ENCODE measurements at regions of chr22 and their contacts with region 1.

Region 1: DNA sequence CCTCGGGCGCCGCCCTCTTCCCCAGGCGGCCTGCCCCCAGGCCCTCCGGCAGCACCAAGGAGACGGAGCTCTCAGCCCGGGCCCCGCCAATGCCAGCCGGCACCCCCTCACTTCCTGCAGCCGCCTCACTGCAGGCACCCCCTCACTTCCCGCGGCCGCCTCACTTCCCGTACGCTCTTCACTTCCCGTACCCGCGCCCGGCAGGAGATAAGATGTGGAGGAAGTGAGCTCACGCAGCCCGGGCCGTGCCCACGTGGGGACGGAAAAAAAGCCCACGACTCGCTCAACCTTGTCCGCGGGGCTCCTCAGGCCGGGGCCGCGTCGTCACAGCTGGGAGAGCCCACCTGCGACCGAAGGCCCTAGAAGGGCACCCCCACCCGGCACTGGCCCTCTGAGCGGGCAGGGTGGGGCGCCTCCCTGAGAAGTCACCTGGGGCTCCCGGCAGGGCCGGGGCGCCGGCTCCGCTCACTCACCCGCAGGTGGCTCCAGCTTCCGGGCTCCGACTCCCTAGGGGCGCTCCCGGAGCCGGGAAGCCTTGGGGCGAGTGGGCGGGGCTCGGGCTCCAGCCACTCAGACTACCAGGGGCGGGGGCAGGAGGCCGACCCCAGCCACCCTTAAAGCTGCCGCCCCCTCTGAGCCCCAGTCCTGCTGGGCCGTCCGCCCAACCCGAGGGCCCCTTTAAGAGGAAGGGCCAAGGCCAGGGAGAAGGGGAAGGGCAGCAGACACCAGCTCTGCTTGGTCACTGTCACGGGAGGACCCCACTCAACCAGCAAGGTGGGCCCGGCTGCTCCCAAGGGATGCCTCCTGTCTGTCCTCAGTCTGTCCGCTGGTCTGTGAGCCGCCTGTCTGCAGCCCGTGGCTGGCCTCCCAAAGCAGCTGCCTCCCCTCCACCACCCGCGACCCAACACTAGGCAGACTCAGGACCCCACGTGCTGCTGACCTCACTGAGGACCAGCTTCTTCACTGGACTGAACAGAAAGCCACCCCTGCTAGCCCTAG is 31.4 kb downstream of the PISD start:
- DNase-seq: peak; percentile 95
- H3K4me3 Mint-ChIP-seq: peak overlapping the region; percentile 90
- H3K27ac Mint-ChIP-seq: peak overlapping the region; percentile 90
- H3K4me1 Mint-ChIP-seq: peaks cover 33% of the 10 kb centered on the region
- H3K27me3 Mint-ChIP-seq: no peaks in the 10 kb centered on the region

Region 2: DNA sequence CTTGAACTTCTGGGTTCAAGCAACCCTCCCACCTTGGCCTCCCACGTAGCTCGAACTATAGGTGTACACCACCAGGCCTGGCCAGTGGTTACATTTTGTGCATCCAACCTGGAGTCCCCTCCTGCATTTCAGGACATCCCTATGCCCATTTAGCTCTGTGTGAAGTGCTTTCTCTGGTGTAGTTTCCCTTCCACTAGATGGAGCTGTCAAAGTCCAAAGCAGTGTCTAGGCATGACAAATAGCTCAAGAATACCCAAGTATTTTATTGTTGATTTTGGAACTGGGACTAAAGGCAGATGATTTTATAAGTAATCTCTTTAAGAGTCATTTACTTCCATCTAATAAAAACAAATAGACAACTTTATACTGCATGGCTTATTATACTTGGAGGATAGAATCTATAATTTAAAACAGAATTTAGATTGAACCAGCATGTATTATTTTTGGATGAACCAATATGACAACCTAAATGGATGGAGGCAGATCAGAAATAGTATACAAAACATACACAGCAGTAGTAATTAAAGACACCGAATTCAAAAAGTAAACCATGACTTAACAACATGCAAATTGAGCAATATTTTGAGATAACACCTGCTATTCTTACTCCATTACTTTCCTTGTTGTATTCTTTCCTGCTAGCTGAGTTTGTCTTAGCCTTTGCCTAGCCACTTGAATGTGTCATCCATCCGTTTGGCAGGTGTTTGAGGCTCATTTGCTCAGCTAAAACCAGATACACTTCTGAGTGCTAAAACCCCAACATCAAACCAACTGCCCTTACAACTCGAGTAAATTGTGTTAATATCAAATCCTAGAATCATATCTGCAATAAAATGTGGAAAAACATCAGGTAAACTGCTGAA is 178.7 kb before region 1 on chr22:
- intact Hi-C with region 1: loop called (anchors 5 kb)
- DNase-seq: peak; percentile 73
- H3K4me3 Mint-ChIP-seq: no peak overlapping the region
- H3K27ac Mint-ChIP-seq: no peak overlapping the region
- H3K4me1 Mint-ChIP-seq: peaks cover 7% of the 10 kb centered on the region
- H3K27me3 Mint-ChIP-seq: no peaks in the 10 kb centered on the region

Region 3: DNA sequence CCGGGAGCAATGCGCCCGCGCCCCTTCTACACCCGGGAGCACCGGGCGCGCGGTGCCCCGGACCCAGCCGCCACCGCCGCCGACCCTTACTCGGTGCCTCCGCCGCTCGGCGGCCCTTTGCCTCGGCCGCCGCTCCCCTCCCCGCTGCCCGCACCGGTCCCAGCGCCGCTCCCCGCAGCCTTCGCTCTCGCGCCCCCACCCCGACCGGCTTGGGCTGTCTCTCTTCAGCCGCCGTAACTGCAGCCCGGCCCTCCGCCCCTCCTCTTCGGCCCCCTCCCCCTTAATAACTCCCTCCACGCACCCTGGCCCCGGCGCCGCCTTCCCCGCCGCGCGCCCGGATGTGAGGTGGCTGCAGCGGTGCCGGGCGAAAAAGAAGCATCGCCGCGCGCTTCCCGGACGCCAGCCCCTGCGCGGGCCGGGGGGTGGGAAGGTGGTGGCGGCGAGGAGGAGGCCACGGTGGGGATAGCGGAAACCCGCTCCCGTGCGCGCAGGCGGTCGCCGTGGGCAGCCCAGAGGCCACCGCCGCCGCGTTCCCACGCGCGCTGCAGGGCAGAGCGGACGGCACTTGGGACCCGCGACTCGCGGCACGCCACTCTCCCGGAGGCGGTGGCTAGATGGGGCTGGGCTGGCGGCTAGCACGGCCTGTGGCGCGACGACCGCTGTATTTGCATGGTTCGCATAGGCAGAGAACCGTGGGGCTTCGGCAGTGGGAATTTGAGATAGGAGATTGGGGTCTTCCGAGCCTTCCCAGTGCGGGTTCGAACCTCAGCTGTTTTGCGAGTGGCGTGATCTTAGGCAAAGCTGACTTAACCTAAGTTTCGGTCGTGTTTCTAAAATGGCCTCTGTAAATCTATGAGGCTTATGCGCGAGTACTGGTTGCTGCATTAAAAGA is 140.8 kb before region 1 on chr22 and contains the start of gene EIF4ENIF1:
- intact Hi-C with region 1: loop called (anchors 2 kb)
- DNase-seq: peak; percentile 95
- H3K4me3 Mint-ChIP-seq: peak within 1 kb of the TSS; percentile 90
- H3K27ac Mint-ChIP-seq: peak within 1 kb of the TSS; percentile 99
- H3K4me1 Mint-ChIP-seq: peaks cover 42% of the 10 kb centered on the region
- H3K27me3 Mint-ChIP-seq: no peaks in the 10 kb centered on the region
- total RNA-seq, gene EIF4ENIF1: 78.1 and 85.6 TPM in 2 replicates

Region 4: DNA sequence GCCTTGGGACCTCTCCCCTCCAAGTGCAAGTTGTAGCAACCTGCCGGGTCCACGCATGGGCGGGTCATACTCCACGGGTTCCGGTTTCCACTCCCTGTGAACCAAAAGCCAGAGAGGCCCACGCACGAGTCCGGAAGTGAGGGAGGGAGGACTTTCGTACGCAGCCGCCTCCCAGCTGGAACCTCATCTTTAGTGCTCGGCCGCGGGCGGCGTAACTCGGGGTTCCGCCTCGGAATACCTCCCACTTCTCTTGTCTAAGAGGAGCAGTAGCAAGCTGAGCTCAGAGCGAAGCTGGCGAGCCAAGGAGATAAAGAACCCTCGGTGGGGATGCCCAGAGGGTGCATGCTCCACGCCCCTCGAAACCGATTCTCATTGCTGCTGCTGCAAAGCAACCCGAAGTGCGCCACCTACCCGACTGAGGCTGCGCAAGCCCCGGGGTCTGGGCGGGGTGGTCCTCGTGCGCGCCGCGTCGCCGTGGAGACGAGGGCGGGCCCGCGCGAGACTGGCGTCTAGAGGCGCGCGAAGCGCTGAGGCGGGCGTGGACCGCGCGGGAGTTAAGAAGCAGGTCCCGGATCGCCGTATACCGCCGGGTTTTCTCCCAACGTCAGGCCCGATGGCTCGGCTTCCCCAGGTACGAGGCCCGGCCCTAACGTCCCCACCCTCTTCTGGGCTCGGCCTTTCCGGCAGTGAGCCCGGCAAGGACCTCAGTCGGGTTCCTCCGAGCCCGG is 134.5 kb before region 1 on chr22 and contains the start of gene SFI1:
- intact Hi-C with region 1: loop called (anchors 2 kb)
- DNase-seq: peak; percentile 99
- H3K4me3 Mint-ChIP-seq: peak within 1 kb of the TSS; percentile 90
- H3K27ac Mint-ChIP-seq: peak within 1 kb of the TSS; percentile 93
- H3K4me1 Mint-ChIP-seq: peaks cover 36% of the 10 kb centered on the region
- H3K27me3 Mint-ChIP-seq: no peaks in the 10 kb centered on the region
- total RNA-seq, gene SFI1: 321 and 352 TPM in 2 replicates

Region 5: GRCh38 chr22:31520051-31520450 is 110.6 kb before region 1 on chr22:
- intact Hi-C with region 1: no loop called
- DNase-seq: no peak
- H3K4me3 Mint-ChIP-seq: no peak overlapping the region
- H3K27ac Mint-ChIP-seq: peak overlapping the region; percentile 68
- H3K4me1 Mint-ChIP-seq: peaks cover 34% of the 10 kb centered on the region
- H3K27me3 Mint-ChIP-seq: no peaks in the 10 kb centered on the region

Region 6: DNA sequence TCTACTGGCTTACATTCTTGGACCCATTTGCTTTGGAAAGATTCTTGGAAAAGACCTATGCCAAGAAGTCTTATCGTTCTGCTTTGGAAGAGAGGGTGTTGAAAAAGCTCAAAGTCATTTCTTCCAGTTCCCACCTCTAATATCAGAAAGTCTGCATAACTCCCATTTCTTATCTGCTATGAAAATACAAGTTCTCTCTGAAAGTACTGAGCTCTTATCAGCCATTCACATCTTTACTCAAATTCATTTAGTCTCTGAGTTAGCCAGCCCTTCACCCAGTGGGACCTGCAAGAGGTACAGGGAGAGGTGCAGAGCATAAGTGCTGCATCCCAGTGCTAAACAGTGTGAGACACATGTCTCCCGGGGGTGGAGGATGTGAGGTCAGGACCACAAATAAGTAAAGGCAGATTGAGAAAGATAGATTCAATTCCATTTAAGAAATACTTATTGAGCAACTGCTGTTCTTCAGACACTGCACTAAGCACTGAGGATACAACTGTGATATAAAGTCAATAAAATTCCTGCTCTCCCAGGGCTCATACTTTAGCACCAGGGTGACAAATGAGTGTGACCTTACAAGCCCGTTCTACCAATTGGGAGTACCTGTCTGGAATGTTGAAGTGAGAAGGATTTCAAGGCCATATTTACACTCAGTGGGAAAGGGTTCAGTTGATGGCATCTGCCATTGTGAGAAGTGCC is 45.3 kb before region 1 on chr22:
- intact Hi-C with region 1: loop called (anchors 1 kb)
- DNase-seq: peak; percentile 67
- H3K4me3 Mint-ChIP-seq: peak overlapping the region; percentile 35
- H3K27ac Mint-ChIP-seq: peak overlapping the region; percentile 88
- H3K4me1 Mint-ChIP-seq: peaks cover 44% of the 10 kb centered on the region
- H3K27me3 Mint-ChIP-seq: no peaks in the 10 kb centered on the region

Region 7: GRCh38 chr22:31602259-31602952 is 28.2 kb before region 1 on chr22:
- intact Hi-C with region 1: no loop called
- DNase-seq: no peak
- H3K4me3 Mint-ChIP-seq: no peak overlapping the region
- H3K27ac Mint-ChIP-seq: no peak overlapping the region
- H3K4me1 Mint-ChIP-seq: peaks cover 3% of the 10 kb centered on the region
- H3K27me3 Mint-ChIP-seq: no peaks in the 10 kb centered on the region

Region 8: DNA sequence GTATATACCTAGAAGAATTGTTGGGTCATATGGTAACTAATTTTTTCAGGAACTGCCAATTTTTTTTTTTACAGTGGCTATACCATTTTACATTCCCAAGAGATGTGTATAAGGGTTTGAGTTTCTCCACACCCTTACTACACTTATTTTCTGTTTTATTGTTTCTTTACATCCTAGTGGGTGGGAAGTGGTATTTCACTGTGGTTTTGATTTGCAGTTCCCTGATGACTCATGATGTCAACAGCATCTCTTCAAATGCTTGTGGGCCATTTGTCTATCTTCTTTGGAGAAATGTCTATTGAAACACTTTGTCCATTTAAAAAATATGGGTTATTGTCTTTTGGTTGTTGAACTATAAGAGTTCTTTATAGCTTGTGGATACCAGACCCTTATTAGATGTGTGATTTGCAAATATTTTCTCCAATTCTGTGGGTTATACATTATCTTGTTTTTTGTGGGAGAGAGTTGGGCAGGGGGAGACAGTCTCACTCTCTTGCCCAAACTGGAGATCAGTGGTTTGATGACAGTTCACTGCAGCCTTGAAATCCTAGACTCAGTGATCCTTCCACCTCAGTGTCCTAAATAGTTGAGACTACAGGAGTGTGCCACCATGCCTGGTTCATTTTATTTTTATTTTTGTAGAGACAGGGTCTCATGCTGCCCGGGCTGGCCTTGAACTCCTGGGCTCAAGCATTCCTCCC is 61.7 kb after region 1 on chr22:
- intact Hi-C with region 1: loop called (anchors 1 kb)
- DNase-seq: peak; percentile 78
- H3K4me3 Mint-ChIP-seq: peak overlapping the region; percentile 52
- H3K27ac Mint-ChIP-seq: peak overlapping the region; percentile 85
- H3K4me1 Mint-ChIP-seq: peaks cover 24% of the 10 kb centered on the region
- H3K27me3 Mint-ChIP-seq: no peaks in the 10 kb centered on the region